ENCODE measurements at regions of chr16 and their contacts with region 1.

Region 1: GRCh38 chr16:81675662-81676061 is 103.4 kb upstream of the PLCG2 start:
- DNase-seq: no peak
- ATAC-seq: no peak
- H3K4me3 ChIP-seq: no peak overlapping the region
- H3K4me3 Mint-ChIP-seq: no peak overlapping the region
- H3K27ac ChIP-seq: no peak overlapping the region
- H3K27ac Mint-ChIP-seq: peak overlapping the region in 5 of 9 donors; percentile 9 to 62 (median 34)
- H3K4me1 ChIP-seq: no peaks in the 10 kb centered on the region
- H3K4me1 Mint-ChIP-seq: peaks cover 0 to 20% (median 0%) of the 10 kb centered on the region in 7 donors
- H3K27me3 ChIP-seq: no peaks in the 10 kb centered on the region
- H3K27me3 Mint-ChIP-seq: no peaks in the 10 kb centered on the region

Region 2: DNA sequence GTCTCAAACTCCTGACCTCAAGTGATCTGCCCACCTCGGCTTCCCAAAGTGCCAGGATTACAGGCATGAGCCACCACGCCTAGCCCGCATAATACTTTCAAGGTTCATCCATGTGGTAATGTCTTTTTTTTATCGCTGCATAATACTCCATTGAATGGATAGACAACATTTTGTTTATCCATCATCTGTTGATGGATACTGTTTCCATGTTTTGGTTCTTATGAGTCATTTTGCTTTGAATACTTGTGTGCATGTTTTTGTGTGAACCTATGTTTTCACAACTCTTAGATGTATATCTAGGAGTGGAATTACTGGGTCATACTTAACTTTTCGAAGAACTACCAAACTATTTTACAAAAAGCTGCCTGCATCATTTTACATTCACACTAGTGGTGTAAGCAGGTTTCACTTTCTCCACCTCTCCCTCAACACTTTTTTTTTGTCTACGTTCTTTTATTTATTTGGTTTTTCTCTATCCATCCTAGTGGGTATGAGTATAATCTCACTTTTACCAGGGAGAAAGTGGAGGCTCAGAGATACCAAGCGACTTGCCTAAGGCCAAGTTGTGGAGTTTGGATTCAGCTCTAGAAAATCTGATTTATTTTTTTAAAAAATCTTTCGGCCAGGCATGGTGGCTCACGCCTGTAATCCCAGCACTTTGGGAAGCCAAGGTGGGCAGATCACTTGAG is 79.9 kb before region 1 on chr16:
- CTCF ChIA-PET with region 1: no interaction called
- POLR2A ChIA-PET with region 1: no interaction called
- intact Hi-C with region 1: loop called in 1 of 2 experiments (anchors 2 kb)
- DNase-seq: no peak
- ATAC-seq: no peak
- H3K4me3 ChIP-seq: no peak overlapping the region
- H3K4me3 Mint-ChIP-seq: no peak overlapping the region
- H3K27ac ChIP-seq: no peak overlapping the region
- H3K27ac Mint-ChIP-seq: peak overlapping the region in 1 of 9 donors; percentile 70
- H3K4me1 ChIP-seq: no peaks in the 10 kb centered on the region
- H3K4me1 Mint-ChIP-seq: peaks cover 17 to 36% (median 24%) of the 10 kb centered on the region in 7 donors
- H3K27me3 ChIP-seq: no peaks in the 10 kb centered on the region
- H3K27me3 Mint-ChIP-seq: no peaks in the 10 kb centered on the region

Region 3: DNA sequence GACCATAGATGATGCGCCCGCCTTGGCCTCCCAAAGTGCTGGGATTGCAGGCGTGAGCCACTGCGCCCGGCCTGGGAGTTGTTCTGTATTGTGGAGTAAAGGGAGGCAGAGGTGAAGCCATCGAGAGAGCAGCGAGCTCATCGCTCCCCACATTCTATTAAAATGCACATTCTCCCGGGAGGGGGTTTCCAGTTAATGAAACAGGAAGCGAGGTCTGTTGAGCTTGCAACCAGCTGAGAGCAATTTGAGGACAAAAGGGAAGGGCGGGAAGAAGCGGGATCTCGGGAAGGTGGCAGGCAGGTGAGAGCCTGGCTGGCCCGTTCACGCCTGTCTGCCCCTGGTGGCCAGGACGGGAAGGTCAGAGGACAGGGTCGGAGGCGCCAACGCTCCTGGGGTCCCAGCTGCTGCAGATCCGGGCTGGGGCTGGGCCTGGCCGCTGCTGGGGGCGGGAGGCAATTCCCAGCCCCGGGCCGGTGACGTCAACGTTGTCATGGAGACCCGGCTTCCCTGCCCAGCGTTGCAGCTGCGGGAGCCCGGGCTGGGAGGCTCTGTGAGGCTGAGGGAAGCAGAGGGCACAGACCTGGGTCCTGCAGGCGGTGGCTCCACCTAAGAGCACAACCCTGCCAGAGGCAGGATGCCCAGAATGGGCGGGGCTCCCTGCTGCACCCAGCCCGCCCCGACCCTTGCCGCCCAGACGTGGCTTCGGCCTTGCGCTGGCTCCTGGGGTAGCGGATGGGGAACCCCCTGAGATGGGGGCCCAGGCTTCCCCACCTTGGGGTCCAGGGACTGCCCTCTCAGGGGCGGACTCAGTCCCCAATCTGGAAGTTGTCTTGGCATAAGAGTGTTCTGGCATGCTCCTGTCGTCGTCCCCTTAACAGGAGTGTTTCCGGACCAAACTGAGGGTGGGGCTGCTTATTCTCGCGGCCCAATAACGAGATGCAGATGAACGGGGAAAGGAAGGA is 54.7 kb after region 1 on chr16:
- CTCF ChIA-PET with region 1: no interaction called
- POLR2A ChIA-PET with region 1: no interaction called
- intact Hi-C with region 1: no loop called
- DNase-seq: peak; percentile 31 to 65 (median 57)
- ATAC-seq: peak; percentile 89
- H3K4me3 ChIP-seq: peak overlapping the region; percentile 56
- H3K4me3 Mint-ChIP-seq: peak overlapping the region; percentile 80 to 91 (median 85)
- H3K27ac ChIP-seq: peak overlapping the region; percentile 76
- H3K27ac Mint-ChIP-seq: peak overlapping the region; percentile 82 to 93 (median 88)
- H3K4me1 ChIP-seq: peaks cover 3 to 8% of the 10 kb centered on the region in 2 donors
- H3K4me1 Mint-ChIP-seq: peaks cover 12 to 18% (median 17%) of the 10 kb centered on the region in 7 donors
- H3K27me3 ChIP-seq: no peaks in the 10 kb centered on the region
- H3K27me3 Mint-ChIP-seq: peaks cover 0 to 8% (median 0%) of the 10 kb centered on the region in 5 donors

Measured in naive thymus-derived CD4-positive, alpha-beta T cell (primary cell).